Dorsolateral prefrontal cortex (tissue), 120 donors: ENCODE measurements at regions of chr13 and their contacts with region 1.

Region 1: DNA sequence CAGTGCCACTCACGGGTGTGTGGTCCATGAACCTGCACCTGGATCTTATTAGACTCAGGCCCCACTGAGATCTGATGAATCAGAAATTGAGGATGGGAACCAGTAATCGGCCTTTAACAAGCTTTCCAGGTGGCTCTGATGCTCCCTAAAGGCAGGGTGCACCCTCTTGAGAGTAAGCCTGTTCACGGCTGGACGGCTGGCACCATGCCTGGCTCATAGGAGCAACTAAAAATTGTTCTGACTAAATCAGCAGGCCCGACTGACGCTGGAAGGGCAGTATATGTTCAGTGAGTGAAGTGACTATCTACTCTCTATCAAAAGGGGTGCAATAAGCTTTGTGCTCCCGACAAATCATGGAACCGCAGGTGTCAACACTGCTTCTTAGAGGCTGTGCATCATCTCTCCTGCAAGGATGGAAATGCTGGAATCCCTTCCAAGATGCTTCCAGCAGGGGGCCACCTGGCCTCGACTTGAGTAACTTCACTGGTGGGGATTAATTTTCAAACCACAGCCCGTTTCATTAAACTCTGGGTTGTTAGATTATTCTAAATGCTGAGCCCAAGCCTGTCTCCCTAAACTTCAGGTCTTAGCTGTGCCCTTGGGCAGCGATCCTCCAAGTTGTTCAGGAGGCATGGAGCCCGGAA is 28.4 kb downstream of the TMTC4 start:
- DNase-seq: peak in 8 of 10 donors; percentile 69 to 83 (median 80)
- H3K4me3 ChIP-seq: no peak overlapping the region
- H3K27ac ChIP-seq: peak overlapping the region in 54 of 59 donors; percentile 7 to 100 (median 77)
- H3K27me3 ChIP-seq: no peaks in the 10 kb centered on the region
- CTCF ChIP-seq: peak; percentile 39 to 78 (median 69)

Region 2: DNA sequence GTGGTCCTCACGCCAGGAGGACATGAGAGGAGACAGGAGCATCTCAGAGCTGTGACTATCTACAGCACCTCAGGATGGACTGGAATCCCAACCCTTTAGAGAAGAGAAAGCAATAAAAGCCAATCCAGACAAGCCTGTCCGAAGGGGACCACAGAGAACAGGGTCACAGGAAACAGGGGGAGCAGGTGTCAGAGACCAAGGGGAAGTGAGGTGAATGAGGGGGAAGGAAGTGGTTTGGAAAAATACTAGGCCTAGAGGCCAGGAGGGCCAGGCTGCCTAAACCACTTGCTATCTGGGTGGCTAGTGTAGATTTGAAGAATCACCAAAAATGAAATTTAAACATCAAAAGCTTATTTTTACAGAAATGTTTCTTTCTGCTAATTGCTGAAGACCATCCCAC is 12.2 kb after region 1 on chr13:
- intact Hi-C with region 1: no loop called
- DNase-seq: no peak
- H3K4me3 ChIP-seq: peak overlapping the region in 10 of 59 donors; percentile 0 to 39 (median 16)
- H3K27ac ChIP-seq: peak overlapping the region; percentile 79 to 100 (median 96)
- H3K27me3 ChIP-seq: no peaks in the 10 kb centered on the region
- CTCF ChIP-seq: peak in 1 of 56 donors; percentile 2

Region 3: DNA sequence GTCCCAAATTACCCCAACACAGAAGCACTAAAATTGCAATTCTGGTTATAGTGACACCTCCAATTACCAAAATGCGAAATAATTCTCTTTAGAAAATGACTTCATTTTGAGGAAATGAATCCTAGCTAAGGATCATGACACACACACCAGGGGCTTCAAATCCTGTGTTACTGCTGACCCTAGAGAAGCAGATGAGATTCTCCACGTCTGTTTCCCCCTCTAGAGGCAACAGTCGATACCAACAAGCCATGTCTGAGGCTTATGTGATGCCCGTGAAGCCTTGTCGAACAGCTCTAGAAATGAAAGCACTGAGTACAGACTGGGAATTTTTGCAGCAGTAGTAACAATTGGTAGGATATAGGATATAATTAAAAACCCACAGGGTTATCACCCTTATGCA is 182.1 kb after region 1 on chr13:
- intact Hi-C with region 1: no loop called
- DNase-seq: no peak
- H3K4me3 ChIP-seq: no peak overlapping the region
- H3K27ac ChIP-seq: peak overlapping the region in 5 of 59 donors; percentile 13 to 27 (median 23)
- H3K27me3 ChIP-seq: no peaks in the 10 kb centered on the region
- CTCF ChIP-seq: peak in 26 of 56 donors; percentile 5 to 64 (median 28)

Region 4: DNA sequence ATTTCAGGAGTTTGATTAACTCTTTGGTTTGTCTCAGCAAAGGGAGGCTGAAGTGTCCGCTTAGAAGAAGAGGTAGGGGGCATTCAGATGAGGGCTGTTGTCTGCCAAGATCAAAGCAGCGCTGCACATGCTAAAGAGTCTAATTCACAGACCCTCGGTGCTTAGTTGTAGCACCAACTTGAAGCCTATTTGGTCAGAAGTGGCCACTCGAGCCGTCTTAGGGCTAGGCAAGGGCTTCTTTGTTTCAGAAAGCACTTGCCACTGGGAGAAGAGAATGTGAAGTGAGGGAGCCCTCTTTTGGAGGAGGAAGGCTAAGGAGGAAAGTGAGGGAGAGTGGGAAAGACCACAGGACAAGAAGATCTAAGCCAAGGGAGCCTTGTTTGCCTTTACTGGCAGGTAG is 341.8 kb after region 1 on chr13:
- intact Hi-C with region 1: loop called in 1 of 2 experiments (anchors 5 kb)
- DNase-seq: peak in 1 of 10 donors; percentile 12
- H3K4me3 ChIP-seq: peak overlapping the region in 1 of 59 donors; percentile 38
- H3K27ac ChIP-seq: no peak overlapping the region
- H3K27me3 ChIP-seq: peaks cover 0 to 1% (median 0%) of the 10 kb centered on the region in 45 donors
- CTCF ChIP-seq: peak in 53 of 56 donors; percentile 23 to 68 (median 47)

Region 5: GRCh38 chr13:101098873-101099272 is 452.7 kb after region 1 on chr13:
- intact Hi-C with region 1: loop called in 1 of 2 experiments (anchors 5 kb)
- DNase-seq: no peak
- H3K4me3 ChIP-seq: no peak overlapping the region
- H3K27ac ChIP-seq: no peak overlapping the region
- H3K27me3 ChIP-seq: no peaks in the 10 kb centered on the region
- CTCF ChIP-seq: no peak